Dendritic cell treated with granulocyte-macrophage colony-stimulating factor and Interleukin-4, amounts not matched to agents 40 ng/mL and 50 ng/mL, for 4 days (primary cell): ENCODE measurements at regions of chr10 and their contacts with region 1.

Region 1: DNA sequence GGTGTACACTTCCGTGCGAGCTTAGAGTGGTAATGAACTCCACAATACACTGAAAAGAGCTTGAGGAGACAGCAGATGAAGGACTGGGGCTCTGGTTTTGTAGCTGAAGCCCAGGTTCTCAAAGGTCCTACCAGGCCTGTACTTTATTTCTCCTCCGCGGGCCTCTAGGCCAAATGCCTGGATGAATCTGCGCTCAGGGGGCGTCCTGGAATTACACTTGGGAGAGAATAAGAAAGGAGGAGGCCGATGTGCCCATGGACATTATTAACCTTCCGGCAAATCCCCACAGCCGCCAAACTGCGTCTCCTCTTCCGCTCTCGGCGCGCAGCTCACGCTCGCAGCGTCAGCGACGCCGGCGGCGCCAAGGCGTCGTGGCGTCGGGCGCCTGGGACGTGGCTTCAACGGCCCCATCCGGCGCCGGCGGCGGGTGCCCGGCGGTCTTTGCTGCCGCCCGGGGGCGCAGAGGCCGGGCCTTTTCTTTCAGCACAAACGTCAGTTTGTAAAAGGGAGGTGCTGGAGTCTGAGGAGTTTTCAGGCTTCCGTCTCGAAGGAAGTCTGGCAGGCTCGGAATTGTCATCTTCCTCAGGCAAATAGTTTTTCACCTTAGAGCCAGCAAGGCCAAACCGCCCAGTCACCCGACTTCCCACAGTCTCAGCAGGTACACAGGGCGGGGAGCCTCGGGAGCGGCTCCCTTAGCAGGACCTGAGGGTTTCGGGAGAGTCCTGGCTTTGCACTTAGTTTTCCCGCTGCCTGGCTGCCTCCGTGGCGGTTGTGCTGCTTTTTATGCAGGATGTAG is at the start of gene CCDC7:
- H3K4me3 Mint-ChIP-seq: peak within 1 kb of the TSS; percentile 88
- H3K27ac Mint-ChIP-seq: peak within 1 kb of the TSS; percentile 94
- H3K4me1 Mint-ChIP-seq: peaks cover 9% of the 10 kb centered on the region
- H3K27me3 Mint-ChIP-seq: peaks cover 9% of the 10 kb centered on the region

Region 2: DNA sequence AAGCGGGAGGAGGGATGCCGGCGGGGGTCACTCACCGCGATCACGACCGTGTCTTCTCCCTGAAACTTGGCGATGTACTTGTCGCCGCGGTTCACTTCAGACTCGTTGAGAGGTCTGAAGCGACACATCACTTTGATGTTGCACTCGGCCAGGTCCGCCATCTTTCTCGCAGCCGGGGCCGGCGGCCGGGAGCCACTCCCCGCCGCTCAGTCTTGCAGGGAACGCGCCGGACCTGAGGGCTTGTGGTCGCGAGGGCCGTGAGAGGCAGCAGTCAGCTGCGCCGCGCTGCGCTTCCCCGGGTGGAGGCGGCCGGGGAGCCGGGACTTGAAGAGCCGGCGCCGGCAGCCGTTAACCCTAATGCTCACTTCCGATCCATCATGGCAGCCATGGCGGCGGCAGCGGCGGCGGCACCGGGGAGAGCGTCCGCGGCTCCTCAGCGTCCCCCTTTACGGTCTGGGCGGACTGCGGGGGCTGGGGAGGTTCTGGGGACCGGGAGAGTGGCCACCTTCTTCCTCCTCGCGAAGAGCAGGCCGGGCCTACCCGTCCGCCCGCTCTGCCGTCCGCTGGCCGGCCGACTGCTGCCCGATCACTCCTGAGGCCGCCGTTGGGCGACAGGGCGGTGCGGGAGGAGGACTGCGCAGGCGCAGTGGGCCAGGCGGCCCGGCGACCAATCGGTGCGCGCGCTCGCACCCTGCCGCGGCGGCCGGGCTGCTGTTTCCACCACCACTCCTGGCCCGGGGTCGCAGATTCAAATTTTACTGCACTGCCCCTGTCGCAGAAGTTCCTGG is 389.9 kb before region 1 on chr10 and contains the start of gene KIF5B:
- intact Hi-C with region 1: loop called (anchors 10 kb)
- H3K4me3 Mint-ChIP-seq: peak within 1 kb of the TSS; percentile 98
- H3K27ac Mint-ChIP-seq: peak within 1 kb of the TSS; percentile 93
- H3K4me1 Mint-ChIP-seq: peaks cover 54% of the 10 kb centered on the region
- H3K27me3 Mint-ChIP-seq: no peaks in the 10 kb centered on the region

Region 3: DNA sequence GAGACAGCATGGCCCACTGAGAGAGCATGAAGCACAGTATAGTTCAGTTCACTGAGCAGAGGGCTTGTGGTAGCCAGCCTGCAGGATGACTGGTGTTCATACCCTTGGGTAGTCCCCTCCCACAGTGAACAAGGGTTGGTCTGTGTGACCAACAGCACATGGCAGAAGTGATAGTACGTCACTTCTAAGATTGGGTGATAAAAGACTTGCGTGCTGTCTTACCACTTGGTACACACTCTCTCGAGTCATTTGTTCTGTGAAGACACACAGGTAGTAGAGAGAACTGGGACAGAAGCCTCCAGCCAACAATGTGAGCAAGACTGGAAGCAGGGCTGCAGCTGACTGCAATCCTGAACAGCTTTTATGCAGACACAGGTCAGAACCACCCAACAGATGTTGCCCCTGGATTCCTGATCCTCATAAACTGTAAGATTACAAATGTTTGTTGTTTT is 113.6 kb before region 1 on chr10:
- intact Hi-C with region 1: no loop called
- H3K4me3 Mint-ChIP-seq: no peak overlapping the region
- H3K27ac Mint-ChIP-seq: no peak overlapping the region
- H3K4me1 Mint-ChIP-seq: peaks cover 84% of the 10 kb centered on the region
- H3K27me3 Mint-ChIP-seq: no peaks in the 10 kb centered on the region

Region 4: GRCh38 chr10:32378363-32379317 is 67.3 kb before region 1 on chr10:
- intact Hi-C with region 1: loop called (anchors 2 kb)
- H3K4me3 Mint-ChIP-seq: no peak overlapping the region
- H3K27ac Mint-ChIP-seq: no peak overlapping the region
- H3K4me1 Mint-ChIP-seq: peaks cover 10% of the 10 kb centered on the region
- H3K27me3 Mint-ChIP-seq: no peaks in the 10 kb centered on the region

Region 5: DNA sequence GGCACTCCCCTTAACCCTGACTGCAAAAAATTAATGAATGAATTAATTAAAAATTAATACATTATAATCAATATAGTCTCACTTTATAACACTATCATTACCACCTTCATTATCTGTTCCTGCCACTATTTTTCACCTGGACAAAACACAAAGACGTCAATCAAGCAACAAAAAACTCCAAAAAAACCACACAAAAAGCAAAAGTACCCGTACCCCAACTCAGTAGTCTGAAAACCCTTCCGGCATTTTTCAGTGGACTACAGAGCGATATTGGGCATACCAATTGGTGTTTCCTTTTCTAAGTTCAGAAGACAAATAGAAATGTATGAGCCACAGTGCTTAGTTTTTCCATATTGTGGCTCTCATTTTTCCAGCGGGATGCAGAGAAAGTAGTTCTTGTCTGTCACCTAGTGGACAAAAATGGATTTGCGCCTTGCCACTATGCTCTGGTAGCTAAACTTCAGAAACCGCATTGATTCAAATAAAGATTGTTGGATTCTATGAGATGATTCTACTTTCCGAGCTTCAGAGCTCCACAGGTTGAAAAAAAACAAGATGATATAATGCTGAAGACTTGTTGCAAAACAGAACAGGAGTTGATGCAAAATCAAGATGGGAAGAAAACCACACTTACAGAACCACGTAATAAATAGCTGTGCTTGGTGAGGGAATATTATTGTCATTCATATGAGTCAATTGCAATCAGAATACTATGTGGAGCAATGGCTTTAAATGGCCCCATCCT is 562.7 kb after region 1 on chr10:
- intact Hi-C with region 1: loop called (anchors 5 kb)
- H3K4me3 Mint-ChIP-seq: no peak overlapping the region
- H3K27ac Mint-ChIP-seq: no peak overlapping the region
- H3K4me1 Mint-ChIP-seq: peaks cover 23% of the 10 kb centered on the region
- H3K27me3 Mint-ChIP-seq: peaks cover 6% of the 10 kb centered on the region